Naive thymus-derived CD4-positive, alpha-beta T cell (primary cell): ENCODE measurements at regions of chr15 and their contacts with region 1.

Region 1: GRCh38 chr15:56052395-56053045 is 59.1 kb upstream of the NEDD4 start:
- DNase-seq: peak in 7 of 9 donors; percentile 14 to 66 (median 55)
- ATAC-seq: peak; percentile 71
- H3K4me3 ChIP-seq: no peak overlapping the region
- H3K4me3 Mint-ChIP-seq: no peak overlapping the region
- H3K27ac ChIP-seq: no peak overlapping the region
- H3K27ac Mint-ChIP-seq: no peak overlapping the region
- H3K4me1 ChIP-seq: no peaks in the 10 kb centered on the region
- H3K4me1 Mint-ChIP-seq: peaks cover 0 to 5% (median 0%) of the 10 kb centered on the region in 7 donors
- H3K27me3 ChIP-seq: no peaks in the 10 kb centered on the region
- H3K27me3 Mint-ChIP-seq: no peaks in the 10 kb centered on the region

Region 2: GRCh38 chr15:55789066-55789660 is 263.4 kb before region 1 on chr15:
- CTCF ChIA-PET with region 1: no interaction called
- POLR2A ChIA-PET with region 1: no interaction called
- intact Hi-C with region 1: loop called in 1 of 2 experiments (anchors 1 kb)
- DNase-seq: peak in 5 of 9 donors; percentile 3 to 61 (median 21)
- ATAC-seq: no peak
- H3K4me3 ChIP-seq: no peak overlapping the region
- H3K4me3 Mint-ChIP-seq: no peak overlapping the region
- H3K27ac ChIP-seq: no peak overlapping the region
- H3K27ac Mint-ChIP-seq: no peak overlapping the region
- H3K4me1 ChIP-seq: no peaks in the 10 kb centered on the region
- H3K4me1 Mint-ChIP-seq: no peaks in the 10 kb centered on the region
- H3K27me3 ChIP-seq: no peaks in the 10 kb centered on the region
- H3K27me3 Mint-ChIP-seq: peaks cover 3 to 19% (median 12%) of the 10 kb centered on the region in 5 donors

Region 3: DNA sequence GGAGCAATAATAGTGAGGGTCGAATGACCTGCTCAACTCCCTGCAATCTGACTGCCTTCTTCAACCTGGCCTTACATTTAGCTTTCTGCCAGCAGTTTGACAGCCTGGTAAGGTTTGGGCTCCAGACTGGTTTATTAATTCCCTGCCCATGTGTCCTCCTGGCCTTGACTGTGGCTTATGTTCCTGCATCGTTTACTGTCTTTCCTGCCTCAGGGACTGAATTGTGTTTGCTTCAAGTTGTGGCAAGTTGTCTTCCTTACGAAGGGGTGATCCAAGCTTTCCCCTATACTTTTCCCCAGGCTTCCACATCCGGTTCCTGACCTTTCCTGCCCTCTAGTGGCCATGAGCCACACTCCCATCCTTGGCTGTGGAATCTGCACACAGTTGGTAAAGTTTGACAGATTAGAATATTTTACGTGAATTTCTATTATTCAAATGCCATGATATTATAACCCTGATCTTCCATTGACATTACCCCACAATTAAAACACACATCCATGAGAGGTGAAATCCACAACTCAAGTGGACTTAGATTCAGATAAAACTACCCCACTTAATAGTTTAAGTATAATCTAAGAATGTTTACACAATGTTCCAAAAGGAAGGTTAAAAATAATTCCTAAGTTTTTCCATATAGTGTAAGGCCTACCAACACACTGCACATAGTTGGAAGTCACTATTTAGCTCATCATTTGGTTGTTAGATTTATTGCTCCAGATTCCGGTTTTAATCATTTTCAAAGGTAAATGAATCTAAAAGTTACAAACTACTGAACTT is 154.8 kb before region 1 on chr15:
- CTCF ChIA-PET with region 1: no interaction called
- POLR2A ChIA-PET with region 1: no interaction called
- intact Hi-C with region 1: loop called (anchors 1 to 5 kb)
- DNase-seq: no peak
- ATAC-seq: no peak
- H3K4me3 ChIP-seq: no peak overlapping the region
- H3K4me3 Mint-ChIP-seq: no peak overlapping the region
- H3K27ac ChIP-seq: no peak overlapping the region
- H3K27ac Mint-ChIP-seq: no peak overlapping the region
- H3K4me1 ChIP-seq: no peaks in the 10 kb centered on the region
- H3K4me1 Mint-ChIP-seq: peaks cover 4 to 14% (median 9%) of the 10 kb centered on the region in 7 donors
- H3K27me3 ChIP-seq: no peaks in the 10 kb centered on the region
- H3K27me3 Mint-ChIP-seq: no peaks in the 10 kb centered on the region

Region 4: GRCh38 chr15:55993111-55993803 is 59.3 kb before region 1 on chr15 and contains the start of gene NEDD4:
- CTCF ChIA-PET with region 1: interaction called, 6 read pairs
- POLR2A ChIA-PET with region 1: no interaction called
- intact Hi-C with region 1: loop called (anchors 1 kb)
- DNase-seq: peak; percentile 60 to 80 (median 68)
- ATAC-seq: peak; percentile 93
- H3K4me3 ChIP-seq: peak within 1 kb of the TSS; percentile 66
- H3K4me3 Mint-ChIP-seq: peak within 1 kb of the TSS; percentile 85 to 95 (median 90)
- H3K27ac ChIP-seq: no peak within 1 kb of the TSS
- H3K27ac Mint-ChIP-seq: peak within 1 kb of the TSS; percentile 7 to 92 (median 68)
- H3K4me1 ChIP-seq: no peaks in the 10 kb centered on the region
- H3K4me1 Mint-ChIP-seq: peaks cover 8 to 26% (median 18%) of the 10 kb centered on the region in 7 donors
- H3K27me3 ChIP-seq: no peaks in the 10 kb centered on the region
- H3K27me3 Mint-ChIP-seq: peaks cover 0 to 52% (median 0%) of the 10 kb centered on the region in 5 donors
- total RNA-seq, gene NEDD4: 3.3 to 15.1 (median 5.4) TPM